T-cell (primary cell): ENCODE measurements at regions of chr12 and their contacts with region 1.

Region 1: DNA sequence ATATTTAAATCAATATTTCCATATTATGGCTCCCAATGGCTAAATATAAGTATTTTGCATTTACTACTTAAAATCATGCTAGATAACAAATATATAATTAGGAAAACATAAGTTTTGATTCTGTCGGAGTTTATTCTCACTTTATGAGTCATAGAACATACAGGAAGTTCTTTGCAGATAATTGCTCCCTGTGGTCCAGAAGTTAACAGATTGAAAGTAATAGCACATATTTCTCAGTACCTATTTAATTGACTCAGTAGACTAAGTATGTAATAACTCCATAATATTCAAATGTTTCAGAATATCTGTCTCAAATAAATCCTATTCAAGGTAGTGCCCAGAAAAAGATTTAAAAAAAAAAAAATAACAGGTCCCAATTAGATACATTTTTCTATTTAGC is 806.0 kb upstream of the ATXN7L3B start:
- DNase-seq: no peak
- ATAC-seq: no peak
- H3K4me3 ChIP-seq: no peak overlapping the region
- H3K4me3 Mint-ChIP-seq: no peak overlapping the region
- H3K27ac ChIP-seq: no peak overlapping the region
- H3K27ac Mint-ChIP-seq: no peak overlapping the region
- H3K4me1 ChIP-seq: no peaks in the 10 kb centered on the region
- H3K4me1 Mint-ChIP-seq: no peaks in the 10 kb centered on the region
- H3K27me3 ChIP-seq: no peaks in the 10 kb centered on the region
- H3K27me3 Mint-ChIP-seq: no peaks in the 10 kb centered on the region

Region 2: DNA sequence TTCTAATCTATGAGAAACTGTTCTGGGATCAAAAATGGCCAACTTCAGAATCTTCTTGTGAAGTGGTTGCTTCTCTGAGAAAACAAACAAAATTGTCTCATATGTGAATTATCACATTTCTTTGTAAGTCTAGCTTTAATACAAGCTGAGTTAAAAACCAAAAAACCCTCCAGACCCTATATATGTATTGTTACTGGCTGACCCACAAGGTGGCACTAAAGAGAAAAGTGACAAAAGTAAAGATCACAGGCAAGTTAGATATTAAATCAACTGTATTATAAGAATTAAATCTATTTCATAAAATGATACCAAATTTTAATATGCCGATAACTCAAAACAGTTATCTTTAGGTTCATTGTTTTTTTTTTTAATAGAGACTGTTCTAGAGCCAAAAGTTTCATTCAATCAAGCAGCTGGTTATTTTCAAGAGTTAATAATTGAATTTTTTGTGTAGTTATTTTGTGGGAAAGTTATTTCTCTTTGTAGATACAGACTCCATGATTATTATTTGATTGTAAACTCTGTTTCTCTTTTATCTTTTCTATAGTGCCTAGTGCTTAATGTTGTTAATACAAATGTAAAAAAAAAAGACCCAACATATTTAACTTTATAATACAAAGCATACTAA is 1467.0 kb before region 1 on chr12:
- CTCF ChIA-PET with region 1: interaction called in 1 of 2 experiments, 11 read pairs
- POLR2A ChIA-PET with region 1: no interaction called
- DNase-seq: no peak
- ATAC-seq: no peak
- H3K4me3 ChIP-seq: no peak overlapping the region
- H3K4me3 Mint-ChIP-seq: no peak overlapping the region
- H3K27ac ChIP-seq: no peak overlapping the region
- H3K27ac Mint-ChIP-seq: no peak overlapping the region
- H3K4me1 ChIP-seq: no peaks in the 10 kb centered on the region
- H3K4me1 Mint-ChIP-seq: no peaks in the 10 kb centered on the region
- H3K27me3 ChIP-seq: no peaks in the 10 kb centered on the region
- H3K27me3 Mint-ChIP-seq: peaks cover 3 to 5% of the 10 kb centered on the region in 2 donors

Region 3: GRCh38 chr12:73699318-73699717 is 32.3 kb before region 1 on chr12:
- CTCF ChIA-PET with region 1: no interaction called
- POLR2A ChIA-PET with region 1: no interaction called
- DNase-seq: no peak
- ATAC-seq: no peak
- H3K4me3 ChIP-seq: no peak overlapping the region
- H3K4me3 Mint-ChIP-seq: no peak overlapping the region
- H3K27ac ChIP-seq: no peak overlapping the region
- H3K27ac Mint-ChIP-seq: no peak overlapping the region
- H3K4me1 ChIP-seq: no peaks in the 10 kb centered on the region
- H3K4me1 Mint-ChIP-seq: no peaks in the 10 kb centered on the region
- H3K27me3 ChIP-seq: no peaks in the 10 kb centered on the region
- H3K27me3 Mint-ChIP-seq: no peaks in the 10 kb centered on the region